ENCODE measurements at regions of chr17 and their contacts with region 1.

Region 1: DNA sequence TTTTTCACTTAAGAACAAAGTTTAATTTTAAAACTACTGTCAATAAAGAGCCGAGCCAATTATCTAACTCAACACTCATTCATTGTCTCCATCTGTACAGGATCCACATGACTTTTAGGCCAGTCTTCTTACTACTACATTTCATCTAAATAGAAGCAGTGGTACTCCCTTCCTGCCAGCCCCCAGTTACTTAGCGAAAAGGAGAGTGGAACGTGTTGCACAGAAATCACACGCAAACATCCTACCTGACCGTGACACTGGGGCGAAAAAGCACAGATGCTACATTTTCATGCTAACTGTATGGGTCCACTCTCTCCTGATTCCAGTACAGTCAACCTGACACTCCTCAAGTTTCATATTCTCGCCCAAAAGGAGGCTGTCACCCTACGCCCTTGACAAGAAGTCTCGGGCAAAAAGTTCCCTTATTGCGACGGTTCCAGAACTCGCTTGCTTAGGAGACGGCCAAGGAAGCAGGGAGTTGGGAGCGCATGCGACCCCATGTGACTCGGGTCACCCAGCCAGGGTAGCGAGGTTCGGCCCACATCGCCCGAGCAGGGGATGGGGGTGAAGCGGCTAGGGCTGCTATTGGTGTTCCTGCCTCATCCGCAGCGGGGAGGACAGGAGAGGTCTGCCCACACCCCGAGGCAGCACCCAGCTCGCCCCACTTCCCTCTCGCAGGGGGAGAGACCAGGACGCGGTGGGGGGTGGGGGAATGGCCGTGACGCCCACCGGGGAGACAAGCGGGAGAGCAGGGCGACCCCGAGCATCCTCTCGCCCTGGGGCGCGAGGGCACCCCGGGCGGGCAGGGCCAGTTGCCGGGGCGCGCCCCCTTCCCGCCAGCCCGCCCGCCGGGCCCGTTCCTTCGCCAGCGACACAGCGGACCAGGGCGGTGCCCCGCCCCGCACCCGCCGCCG is 935 bp downstream of the GNA13 start:
- DNase-seq: peak; percentile 55
- H3K4me3 Mint-ChIP-seq: peak overlapping the region; percentile 98
- H3K27ac Mint-ChIP-seq: peak overlapping the region; percentile 94
- H3K4me1 Mint-ChIP-seq: peaks cover 43% of the 10 kb centered on the region
- H3K27me3 Mint-ChIP-seq: no peaks in the 10 kb centered on the region

Region 2: DNA sequence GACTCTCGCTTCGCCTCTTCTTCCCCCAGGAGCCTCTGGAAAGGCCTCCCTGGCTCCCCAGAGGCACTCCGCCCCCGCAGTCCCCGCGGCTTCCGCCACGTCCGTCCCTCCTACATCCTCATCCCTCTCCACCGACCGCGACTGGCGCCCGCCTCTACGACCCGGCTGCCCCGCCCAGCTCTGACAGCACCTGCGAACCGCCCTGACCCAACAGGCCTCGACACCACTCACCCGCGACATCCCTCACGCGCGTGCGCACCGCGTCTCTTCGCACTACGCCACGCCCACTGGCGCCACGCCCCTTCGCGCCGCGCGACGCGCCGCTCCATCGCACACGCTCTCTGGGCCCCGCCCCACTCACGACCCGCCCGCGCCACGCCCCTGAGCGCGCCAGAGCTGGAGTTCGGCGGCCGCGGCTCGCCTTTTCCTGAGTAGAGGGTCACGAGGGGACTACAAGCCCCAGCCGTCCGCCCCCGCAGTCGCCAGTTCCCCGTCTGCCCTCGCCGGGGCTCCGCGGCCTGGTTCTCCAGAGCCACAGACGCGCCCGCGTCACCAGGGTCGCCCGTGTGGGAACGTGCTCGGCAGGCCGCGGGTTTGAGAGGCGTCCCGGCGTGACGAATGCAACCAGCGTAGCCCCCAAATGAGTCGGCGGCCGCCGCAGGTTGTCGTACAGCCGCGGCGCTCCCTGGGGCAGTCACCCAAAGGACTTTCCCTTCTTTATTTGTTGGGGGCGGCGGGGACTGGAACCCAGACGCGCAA is 80.1 kb before region 1 on chr17:
- CTCF ChIA-PET with region 1: interaction called, 4 read pairs
- intact Hi-C with region 1: loop called (anchors 1 kb)
- DNase-seq: peak; percentile 94
- H3K4me3 Mint-ChIP-seq: peak overlapping the region; percentile 90
- H3K27ac Mint-ChIP-seq: peak overlapping the region; percentile 91
- H3K4me1 Mint-ChIP-seq: peaks cover 45% of the 10 kb centered on the region
- H3K27me3 Mint-ChIP-seq: no peaks in the 10 kb centered on the region

Region 3: GRCh38 chr17:64992325-64992811 is 63.2 kb before region 1 on chr17:
- CTCF ChIA-PET with region 1: no interaction called
- intact Hi-C with region 1: no loop called
- DNase-seq: no peak
- H3K4me3 Mint-ChIP-seq: no peak overlapping the region
- H3K27ac Mint-ChIP-seq: no peak overlapping the region
- H3K4me1 Mint-ChIP-seq: peaks cover 5% of the 10 kb centered on the region
- H3K27me3 Mint-ChIP-seq: no peaks in the 10 kb centered on the region

Region 4: DNA sequence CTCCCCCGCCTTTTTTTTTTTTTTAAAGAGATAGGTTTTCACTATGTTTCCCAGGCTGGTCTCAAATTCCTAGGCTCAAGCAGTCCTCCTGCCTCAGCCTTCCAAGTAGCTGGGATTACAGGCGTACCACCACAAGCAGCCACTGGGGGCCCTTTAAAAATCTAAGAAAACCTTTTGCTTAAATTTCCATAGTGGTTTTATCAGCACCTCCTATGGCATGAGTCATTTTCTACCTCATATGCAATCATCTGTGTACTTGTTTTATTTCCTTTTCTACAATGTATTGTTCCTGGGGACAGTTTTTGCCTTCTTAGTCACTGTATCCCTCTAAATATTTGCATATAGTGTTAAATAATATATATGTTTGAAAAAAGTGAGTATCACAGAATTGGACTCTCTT is 28.3 kb before region 1 on chr17:
- CTCF ChIA-PET with region 1: interaction called, 5 read pairs
- intact Hi-C with region 1: loop called (anchors 1 kb)
- DNase-seq: peak; percentile 77
- H3K4me3 Mint-ChIP-seq: peak overlapping the region; percentile 58
- H3K27ac Mint-ChIP-seq: peak overlapping the region; percentile 94
- H3K4me1 Mint-ChIP-seq: peaks cover 80% of the 10 kb centered on the region
- H3K27me3 Mint-ChIP-seq: no peaks in the 10 kb centered on the region

Region 5: DNA sequence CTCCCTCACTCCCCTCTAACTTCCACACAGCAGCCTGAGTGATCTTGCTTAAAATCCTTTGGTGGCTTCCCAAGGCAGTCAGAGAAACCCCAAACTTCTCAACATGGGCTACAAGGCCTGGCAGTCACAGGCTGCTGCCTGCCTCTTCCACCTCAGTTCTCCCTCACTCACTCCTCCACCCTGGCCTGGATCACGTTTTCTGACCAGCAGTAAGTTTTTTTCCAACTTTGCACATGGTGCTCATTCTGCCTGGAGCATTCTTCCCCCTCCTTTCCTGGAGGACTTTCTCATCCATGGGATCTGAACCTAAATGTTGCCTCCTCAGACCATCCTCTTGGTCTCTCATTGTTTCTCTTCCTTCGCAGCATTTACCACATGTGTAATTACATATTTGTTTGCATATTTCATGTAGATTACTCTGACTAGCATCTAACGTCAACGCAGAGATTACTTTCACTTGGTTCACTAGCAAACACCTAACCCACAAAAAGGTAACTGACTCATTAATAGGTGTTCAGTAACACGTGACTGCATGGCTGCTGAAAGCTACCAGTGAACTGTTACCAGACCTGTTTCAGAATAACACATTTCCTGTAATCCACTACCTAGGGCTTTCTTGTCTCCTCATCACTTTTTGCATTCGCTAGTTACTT is 16.1 kb before region 1 on chr17:
- CTCF ChIA-PET with region 1: interaction called, 7 read pairs
- intact Hi-C with region 1: loop called (anchors 1 kb)
- DNase-seq: peak; percentile 70
- H3K4me3 Mint-ChIP-seq: peak overlapping the region; percentile 39
- H3K27ac Mint-ChIP-seq: peak overlapping the region; percentile 89
- H3K4me1 Mint-ChIP-seq: peaks cover 80% of the 10 kb centered on the region
- H3K27me3 Mint-ChIP-seq: no peaks in the 10 kb centered on the region

Region 6: GRCh38 chr17:65137021-65137991 is 81.7 kb after region 1 on chr17 and contains the start of gene RGS9:
- CTCF ChIA-PET with region 1: interaction called, 4 read pairs
- intact Hi-C with region 1: loop called (anchors 5 kb)
- DNase-seq: peak; percentile 75
- H3K4me3 Mint-ChIP-seq: peak within 1 kb of the TSS; percentile 59
- H3K27ac Mint-ChIP-seq: no peak within 1 kb of the TSS
- H3K4me1 Mint-ChIP-seq: peaks cover 15% of the 10 kb centered on the region
- H3K27me3 Mint-ChIP-seq: peaks cover 11% of the 10 kb centered on the region
- total RNA-seq, gene RGS9: 1.2 to 1.6 TPM

Measured in activated naive CD4-positive, alpha-beta T cell treated with anti-CD3 and anti-CD28 coated beads for 36 hours (primary cell).